Posterior vena cava (tissue), 2 donors: ENCODE measurements at regions of chr7 and their contacts with region 1.

Region 1: DNA sequence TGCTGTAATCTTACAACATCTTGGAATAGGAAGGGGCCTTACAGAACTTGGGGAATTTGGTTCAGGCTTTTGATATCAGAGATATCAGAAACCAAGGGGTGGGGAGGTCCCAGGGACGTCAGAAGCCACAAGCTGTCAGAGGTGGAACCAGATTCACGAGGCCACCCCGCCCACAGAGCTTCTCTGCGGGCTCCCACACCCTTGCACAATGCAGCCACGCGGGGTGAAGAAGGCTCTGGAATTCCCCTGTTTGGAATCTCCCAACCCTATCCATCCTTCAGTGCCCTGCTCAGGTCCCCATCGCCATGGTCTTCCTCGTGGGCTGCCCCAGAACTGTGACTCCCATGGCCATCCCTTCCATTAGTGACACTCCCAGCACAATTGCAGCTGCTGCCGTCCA is 247.1 kb upstream of the SHH start:
- DNase-seq: peak; percentile 65

Region 2: GRCh38 chr7:156014201-156014600 is 45.2 kb before region 1 on chr7:
- intact Hi-C with region 1: loop called in 1 of 2 experiments (anchors 2 kb)
- DNase-seq: no peak